ENCODE measurements at regions of chr11 and their contacts with region 1.

Region 1: DNA sequence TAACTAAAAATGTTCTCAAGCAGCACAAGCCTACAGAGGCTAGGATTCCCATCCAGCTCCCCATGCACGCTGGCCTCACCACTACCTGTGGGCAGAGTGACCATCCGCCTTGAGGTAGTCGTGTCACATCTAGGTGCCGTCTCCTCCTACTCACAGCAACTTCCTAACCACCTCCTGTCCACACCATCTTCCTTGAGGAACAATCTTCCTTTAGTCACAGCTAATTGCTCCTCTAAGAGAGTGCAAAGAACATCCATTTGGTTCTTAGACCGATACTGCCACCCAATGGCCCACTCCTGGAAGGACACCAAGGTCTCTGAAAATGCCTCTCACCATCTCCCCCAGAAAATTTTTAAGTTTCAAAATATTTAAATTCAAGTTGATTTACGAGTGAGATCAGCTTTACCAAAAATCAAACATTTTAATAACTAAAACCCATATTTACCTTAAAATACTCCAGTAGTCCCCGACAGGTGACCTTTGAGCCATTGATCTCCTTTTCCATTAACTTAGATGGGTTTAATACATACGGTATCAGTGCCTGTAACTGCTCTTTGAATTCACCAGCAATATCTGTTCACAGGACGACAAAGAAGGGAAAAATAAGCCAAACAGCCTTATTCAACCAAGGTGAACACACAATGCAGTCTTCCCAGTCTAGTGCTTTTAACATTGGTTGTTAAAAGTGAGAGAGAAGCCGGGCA is 21.7 kb upstream of the PLAAT3 start:
- DNase-seq: peak; percentile 48
- H3K4me3 Mint-ChIP-seq: no peak overlapping the region
- H3K27ac Mint-ChIP-seq: no peak overlapping the region
- H3K4me1 Mint-ChIP-seq: peaks cover 12% of the 10 kb centered on the region
- H3K27me3 Mint-ChIP-seq: no peaks in the 10 kb centered on the region

Region 2: GRCh38 chr11:63032457-63032856 is 603.5 kb before region 1 on chr11:
- intact Hi-C with region 1: loop called (anchors 10 kb)
- DNase-seq: no peak
- H3K4me3 Mint-ChIP-seq: no peak overlapping the region
- H3K27ac Mint-ChIP-seq: no peak overlapping the region
- H3K4me1 Mint-ChIP-seq: no peaks in the 10 kb centered on the region
- H3K27me3 Mint-ChIP-seq: peaks cover 20% of the 10 kb centered on the region

Region 3: GRCh38 chr11:63478896-63479295 is 157.0 kb before region 1 on chr11:
- intact Hi-C with region 1: loop called (anchors 1 kb)
- DNase-seq: peak; percentile 31
- H3K4me3 Mint-ChIP-seq: no peak overlapping the region
- H3K27ac Mint-ChIP-seq: no peak overlapping the region
- H3K4me1 Mint-ChIP-seq: no peaks in the 10 kb centered on the region
- H3K27me3 Mint-ChIP-seq: peaks cover 36% of the 10 kb centered on the region

Region 4: DNA sequence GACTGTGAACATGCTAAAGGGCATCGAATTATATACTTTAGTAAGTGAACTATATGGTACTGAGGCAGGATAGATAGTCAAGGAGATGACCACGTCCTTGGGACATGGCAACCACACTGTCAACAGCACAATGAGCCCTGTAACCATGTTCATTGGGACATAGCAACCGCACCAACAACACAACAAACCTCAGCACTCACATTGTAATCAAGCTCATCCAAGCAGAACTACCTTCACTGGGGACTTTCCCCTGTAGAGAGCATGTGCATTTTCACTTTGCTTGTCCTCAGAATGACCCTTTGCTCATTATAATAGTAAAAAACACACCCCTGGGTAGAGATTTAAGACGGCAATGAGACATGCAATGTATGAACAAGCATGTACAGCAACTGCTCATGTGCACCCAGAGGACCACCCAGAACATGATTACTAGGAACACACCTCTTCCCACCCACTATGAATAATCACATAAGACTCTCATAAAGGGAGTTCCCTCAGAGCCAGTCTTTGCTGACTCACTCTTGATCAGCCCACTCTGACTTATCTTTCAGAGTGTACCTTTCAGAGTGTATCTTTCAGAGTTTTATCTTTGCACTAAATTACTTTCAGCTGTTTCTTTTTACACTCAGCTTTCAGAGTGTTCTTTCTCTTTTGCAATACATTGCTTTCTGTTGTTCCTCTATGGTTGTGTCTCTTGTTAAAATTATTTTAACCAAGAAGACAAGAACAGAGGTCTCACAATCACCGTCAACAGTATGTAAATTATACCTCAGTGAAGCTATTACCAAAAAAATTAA is 68.7 kb before region 1 on chr11:
- intact Hi-C with region 1: loop called (anchors 2 kb)
- DNase-seq: peak; percentile 77
- H3K4me3 Mint-ChIP-seq: peak overlapping the region; percentile 50
- H3K27ac Mint-ChIP-seq: peak overlapping the region; percentile 93
- H3K4me1 Mint-ChIP-seq: peaks cover 36% of the 10 kb centered on the region
- H3K27me3 Mint-ChIP-seq: peaks cover 6% of the 10 kb centered on the region

Region 5: GRCh38 chr11:63681321-63682049 is 45.6 kb after region 1 on chr11 and contains the start of gene RTN3:
- intact Hi-C with region 1: loop called (anchors 5 kb)
- DNase-seq: peak; percentile 100
- H3K4me3 Mint-ChIP-seq: peak within 1 kb of the TSS; percentile 91
- H3K27ac Mint-ChIP-seq: peak within 1 kb of the TSS; percentile 91
- H3K4me1 Mint-ChIP-seq: peaks cover 32% of the 10 kb centered on the region
- H3K27me3 Mint-ChIP-seq: peaks cover 11% of the 10 kb centered on the region
- total RNA-seq, gene RTN3: 52.1 and 54.7 TPM in 2 replicates